Activated CD8-positive, alpha-beta memory T cell treated with anti-CD3 and anti-CD28 coated beads, Interleukin-2, amount 10 ng/mL, durations not matched to agents 7 days and 5 days (primary cell): ENCODE measurements at regions of chr5 and their contacts with region 1.

Region 1: DNA sequence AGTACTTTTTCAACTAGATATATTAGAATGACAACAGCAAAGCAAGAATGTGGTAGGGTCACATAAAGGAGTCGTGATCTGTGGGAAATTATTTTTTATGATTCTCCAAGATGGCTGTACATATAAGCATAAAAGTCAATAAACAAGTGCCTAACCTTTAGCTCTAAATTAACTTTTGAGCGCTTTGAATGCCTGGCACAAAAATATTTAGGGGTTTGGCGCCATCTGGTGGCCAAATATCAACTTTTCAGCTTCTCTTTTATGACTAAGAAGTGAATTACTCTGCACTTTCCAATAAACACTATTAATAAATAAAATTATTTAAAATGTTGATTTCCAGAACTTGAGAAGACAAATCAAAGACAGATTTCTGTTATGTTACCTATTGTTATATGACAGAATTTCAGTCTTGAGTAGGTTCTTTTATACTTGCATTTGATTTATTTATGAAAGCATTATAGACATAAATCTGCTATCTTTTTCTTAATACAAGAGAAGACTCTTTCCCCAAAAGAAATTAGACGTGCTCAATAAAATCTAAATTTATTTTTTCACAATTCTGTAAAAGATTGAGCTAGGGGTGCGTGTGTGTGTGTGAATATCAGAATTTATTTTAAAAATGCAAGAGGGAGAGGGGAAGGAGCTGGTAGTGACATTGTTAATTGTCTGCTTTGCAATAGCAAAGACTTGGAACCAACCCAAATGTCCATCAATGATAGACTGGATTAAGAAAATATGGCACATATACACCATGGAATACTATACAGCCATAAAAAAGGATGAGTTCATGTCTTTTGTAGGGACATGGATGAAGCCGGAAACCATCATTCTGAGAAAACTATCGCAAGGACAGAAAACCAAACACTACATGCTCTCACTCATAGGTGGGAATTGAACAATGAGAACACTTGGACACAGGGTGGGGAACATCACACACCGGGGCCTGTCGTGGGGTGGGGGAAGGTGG is 36.7 kb upstream of the ARRDC3 start:
- DNase-seq: peak; percentile 80
- ATAC-seq: peak; percentile 63
- H3K4me3 Mint-ChIP-seq: no peak overlapping the region
- H3K27ac Mint-ChIP-seq: no peak overlapping the region
- H3K4me1 Mint-ChIP-seq: peaks cover 14% of the 10 kb centered on the region
- H3K27me3 Mint-ChIP-seq: peaks cover 2% of the 10 kb centered on the region

Region 2: GRCh38 chr5:90932052-90932699 is 487.7 kb before region 1 on chr5:
- CTCF ChIA-PET with region 1: interaction called, 12 read pairs
- DNase-seq: peak; percentile 44
- ATAC-seq: no peak
- H3K4me3 Mint-ChIP-seq: no peak overlapping the region
- H3K27ac Mint-ChIP-seq: no peak overlapping the region
- H3K4me1 Mint-ChIP-seq: no peaks in the 10 kb centered on the region
- H3K27me3 Mint-ChIP-seq: peaks cover 9% of the 10 kb centered on the region

Region 3: DNA sequence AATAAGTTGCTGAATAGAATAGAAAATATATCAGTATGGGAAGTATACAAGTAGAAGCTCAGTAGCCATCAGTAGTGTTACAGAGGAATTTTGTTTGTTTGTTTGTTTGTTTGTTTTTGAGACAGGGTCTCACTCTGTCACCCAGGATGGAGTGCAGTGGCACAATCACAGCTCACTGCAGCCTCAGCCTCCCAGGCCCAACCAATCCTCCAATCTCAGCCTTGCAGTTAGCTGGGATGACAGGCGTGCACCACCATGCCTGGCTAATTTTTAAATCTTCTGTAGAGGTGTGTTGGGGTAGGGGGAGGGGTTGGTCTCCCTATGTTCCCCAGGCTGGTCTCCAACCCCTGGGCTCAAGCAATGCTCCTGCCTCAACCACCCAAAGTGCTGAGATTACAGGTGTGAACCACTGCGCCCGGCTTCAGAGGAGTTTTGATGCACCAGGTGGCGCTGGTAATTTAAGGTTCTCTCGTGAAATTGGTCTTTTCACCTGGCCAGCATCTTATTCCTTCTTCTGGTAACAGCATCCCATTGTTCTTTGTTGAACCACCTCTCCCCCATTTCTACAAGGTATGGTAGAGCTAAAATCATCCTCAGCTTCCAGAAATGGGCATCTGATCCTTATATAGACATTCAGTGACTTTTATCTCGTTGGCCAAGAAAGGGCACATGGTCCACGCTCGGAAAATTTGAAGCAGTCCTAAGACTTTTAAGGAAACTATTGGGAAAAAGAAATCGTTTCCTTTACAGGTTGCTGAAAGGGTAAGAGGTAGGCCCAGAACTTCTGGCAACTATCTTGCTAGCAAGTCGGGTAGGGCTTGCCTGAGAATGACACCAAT is 193.8 kb before region 1 on chr5:
- CTCF ChIA-PET with region 1: interaction called, 22 read pairs
- DNase-seq: peak; percentile 73
- ATAC-seq: peak; percentile 68
- H3K4me3 Mint-ChIP-seq: no peak overlapping the region
- H3K27ac Mint-ChIP-seq: no peak overlapping the region
- H3K4me1 Mint-ChIP-seq: no peaks in the 10 kb centered on the region
- H3K27me3 Mint-ChIP-seq: peaks cover 18% of the 10 kb centered on the region

Region 4: GRCh38 chr5:91408710-91409109 is 11.1 kb before region 1 on chr5:
- CTCF ChIA-PET with region 1: interaction called, 18 read pairs
- DNase-seq: no peak
- ATAC-seq: no peak
- H3K4me3 Mint-ChIP-seq: no peak overlapping the region
- H3K27ac Mint-ChIP-seq: no peak overlapping the region
- H3K4me1 Mint-ChIP-seq: no peaks in the 10 kb centered on the region
- H3K27me3 Mint-ChIP-seq: no peaks in the 10 kb centered on the region

Region 5: GRCh38 chr5:91456928-91457680 is 37.2 kb after region 1 on chr5:
- CTCF ChIA-PET with region 1: no interaction called
- DNase-seq: no peak
- ATAC-seq: no peak
- H3K4me3 Mint-ChIP-seq: no peak overlapping the region
- H3K27ac Mint-ChIP-seq: no peak overlapping the region
- H3K4me1 Mint-ChIP-seq: no peaks in the 10 kb centered on the region
- H3K27me3 Mint-ChIP-seq: no peaks in the 10 kb centered on the region

Region 6: DNA sequence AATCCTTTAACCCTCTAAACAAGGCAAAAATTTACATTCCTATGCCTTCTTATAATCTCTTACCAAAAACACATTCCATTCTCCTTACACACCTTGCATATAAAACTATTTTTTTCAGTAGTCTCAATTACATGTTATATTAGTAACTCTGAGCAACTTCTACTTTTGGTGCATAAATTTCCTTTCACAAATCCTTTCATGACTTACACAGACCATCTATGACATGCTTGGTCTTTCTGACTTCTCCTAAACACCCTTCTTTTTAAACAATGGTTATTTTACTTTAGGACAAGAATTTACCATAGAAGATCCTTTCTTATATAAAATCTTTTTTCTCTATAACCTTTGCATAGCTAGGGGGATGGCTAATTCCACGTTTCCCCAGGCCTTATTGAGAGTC is 171.2 kb after region 1 on chr5:
- CTCF ChIA-PET with region 1: no interaction called
- DNase-seq: no peak
- ATAC-seq: no peak
- H3K4me3 Mint-ChIP-seq: no peak overlapping the region
- H3K27ac Mint-ChIP-seq: no peak overlapping the region
- H3K4me1 Mint-ChIP-seq: no peaks in the 10 kb centered on the region
- H3K27me3 Mint-ChIP-seq: no peaks in the 10 kb centered on the region